Calu3 (cell line): ENCODE measurements at regions of chr12 and their contacts with region 1.

Region 1: DNA sequence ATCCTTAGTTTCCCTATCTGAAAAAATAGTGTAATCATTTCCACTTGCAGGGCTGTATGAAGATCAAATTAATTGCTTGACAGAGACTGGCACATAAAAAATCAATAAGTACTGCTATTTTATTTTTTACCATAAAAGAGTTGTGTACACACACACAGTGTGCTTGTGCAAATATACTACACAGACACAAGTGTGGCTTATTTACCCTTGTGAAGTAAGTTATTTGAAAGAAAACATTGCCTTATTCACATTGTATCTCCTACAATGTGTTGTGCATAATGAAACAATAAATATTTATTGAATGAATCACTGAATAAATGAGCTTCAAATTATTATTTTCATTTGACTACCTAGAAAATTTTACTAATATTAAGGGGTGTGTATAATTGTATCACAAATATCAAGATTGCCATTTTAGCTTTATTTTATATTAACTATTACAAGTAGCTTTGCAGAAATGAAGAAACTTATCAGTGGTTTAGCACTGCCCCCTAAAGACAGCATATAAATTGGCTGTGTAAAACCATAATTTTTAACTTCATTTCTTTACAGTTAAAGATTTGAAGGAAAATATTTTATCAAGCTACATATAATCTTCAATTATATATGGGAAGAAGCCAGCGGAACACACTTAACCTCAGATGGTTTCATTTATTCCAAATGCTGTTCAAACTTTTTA is 11.3 kb downstream of the GARIN6 start:
- DNase-seq: no peak
- H3K4me3 Mint-ChIP-seq: no peak overlapping the region
- H3K27ac Mint-ChIP-seq: no peak overlapping the region
- H3K4me1 Mint-ChIP-seq: no peaks in the 10 kb centered on the region
- H3K27me3 Mint-ChIP-seq: no peaks in the 10 kb centered on the region
- CTCF ChIP-seq: no peak

Region 2: GRCh38 chr12:98955277-98955676 is 703.5 kb before region 1 on chr12:
- CTCF ChIA-PET with region 1: no interaction called
- intact Hi-C with region 1: loop called (anchors 10 kb)
- DNase-seq: peak; percentile 54
- H3K4me3 Mint-ChIP-seq: no peak overlapping the region
- H3K27ac Mint-ChIP-seq: no peak overlapping the region
- H3K4me1 Mint-ChIP-seq: no peaks in the 10 kb centered on the region
- H3K27me3 Mint-ChIP-seq: peaks cover 19% of the 10 kb centered on the region
- CTCF ChIP-seq: peak; percentile 50

Region 3: DNA sequence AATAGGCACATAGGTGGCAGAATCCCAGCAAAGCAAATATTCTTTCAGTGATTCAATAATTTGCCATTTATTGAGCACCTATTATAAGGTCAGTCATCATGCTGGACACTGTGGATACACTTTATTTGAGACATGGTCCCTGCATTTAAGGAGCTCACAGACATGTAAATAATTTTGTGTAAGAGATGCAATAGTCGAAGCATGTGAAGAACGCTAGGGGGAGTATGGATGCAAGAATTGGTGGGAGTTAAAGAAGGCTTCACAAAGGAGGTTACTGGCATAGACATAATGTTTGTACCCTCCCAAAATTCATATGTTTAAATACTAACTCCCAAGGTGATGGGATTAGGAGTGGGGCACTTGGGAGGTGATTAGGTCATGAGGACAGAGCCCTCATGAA is 271.9 kb before region 1 on chr12:
- CTCF ChIA-PET with region 1: interaction called, 6 read pairs
- intact Hi-C with region 1: loop called (anchors 2 kb)
- DNase-seq: peak; percentile 13
- H3K4me3 Mint-ChIP-seq: no peak overlapping the region
- H3K27ac Mint-ChIP-seq: no peak overlapping the region
- H3K4me1 Mint-ChIP-seq: peaks cover 2% of the 10 kb centered on the region
- H3K27me3 Mint-ChIP-seq: no peaks in the 10 kb centered on the region
- CTCF ChIP-seq: peak; percentile 29

Region 4: DNA sequence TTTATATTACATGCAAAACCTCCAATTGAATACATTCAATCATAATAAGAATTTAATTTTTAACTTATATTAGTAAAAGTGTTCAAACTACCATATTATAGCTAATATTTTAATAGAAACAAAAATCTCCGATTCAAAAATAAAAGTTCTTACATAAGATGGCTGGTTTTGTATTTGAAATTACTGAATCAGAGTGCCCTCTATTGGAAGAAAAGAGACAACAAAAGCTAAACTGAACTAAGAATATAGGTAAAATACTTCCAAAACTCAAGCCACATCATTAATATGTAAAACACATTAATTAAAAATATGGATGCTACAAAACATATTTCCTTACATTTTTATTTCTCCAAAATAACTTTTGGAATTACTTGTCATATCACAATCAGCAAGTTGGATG is 109.0 kb after region 1 on chr12:
- CTCF ChIA-PET with region 1: interaction called, 3 read pairs
- intact Hi-C with region 1: loop called (anchors 5 kb)
- DNase-seq: no peak
- H3K4me3 Mint-ChIP-seq: no peak overlapping the region
- H3K27ac Mint-ChIP-seq: no peak overlapping the region
- H3K4me1 Mint-ChIP-seq: no peaks in the 10 kb centered on the region
- H3K27me3 Mint-ChIP-seq: peaks cover 18% of the 10 kb centered on the region
- CTCF ChIP-seq: no peak

Region 5: GRCh38 chr12:100267619-100268281 is 608.9 kb after region 1 on chr12:
- CTCF ChIA-PET with region 1: no interaction called
- intact Hi-C with region 1: no loop called
- DNase-seq: no peak
- H3K4me3 Mint-ChIP-seq: peak overlapping the region; percentile 94
- H3K27ac Mint-ChIP-seq: peak overlapping the region; percentile 48
- H3K4me1 Mint-ChIP-seq: peaks cover 13% of the 10 kb centered on the region
- H3K27me3 Mint-ChIP-seq: no peaks in the 10 kb centered on the region
- CTCF ChIP-seq: no peak